HCT116 (cell line): ENCODE measurements at regions of chr2 and their contacts with region 1.

Region 1: DNA sequence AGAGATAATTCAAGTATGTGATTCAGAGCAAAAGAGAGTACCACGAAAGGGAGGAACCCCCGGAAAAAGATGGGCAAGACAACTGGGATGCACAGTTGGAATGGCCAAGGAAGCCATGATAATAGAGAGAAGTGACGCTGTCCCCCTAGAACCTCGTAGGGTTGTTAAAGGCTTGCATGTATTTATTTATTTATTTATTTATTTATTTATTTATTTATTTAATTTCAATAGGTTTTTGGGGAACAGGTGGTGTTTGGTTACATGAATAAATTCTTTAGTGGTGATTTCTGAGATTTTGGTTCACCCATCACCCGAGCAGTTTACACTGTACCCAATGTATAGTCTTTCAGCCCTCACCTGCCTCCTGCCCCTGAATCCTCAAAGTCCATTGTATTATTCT is 11.5 kb upstream of the PDCL3 start:
- DNase-seq: no peak
- ATAC-seq: no peak
- H3K4me3 ChIP-seq: no peak overlapping the region
- H3K27ac ChIP-seq: no peak overlapping the region
- H3K4me1 ChIP-seq: no peaks in the 10 kb centered on the region
- H3K27me3 ChIP-seq: no peaks in the 10 kb centered on the region
- CTCF ChIP-seq: no peak
- POLR2A ChIP-seq: no peak
- RAD21 ChIP-seq: no peak

Region 2: GRCh38 chr2:100562732-100563720 is 11.7 kb after region 1 on chr2 and contains the start of gene PDCL3:
- CTCF ChIA-PET with region 1: no interaction called
- POLR2A ChIA-PET with region 1: interaction called, 13 read pairs
- RAD21 ChIA-PET with region 1: no interaction called
- intact Hi-C with region 1: no loop called
- DNase-seq: peak; percentile 97
- ATAC-seq: peak; percentile 91
- H3K4me3 ChIP-seq: peak within 1 kb of the TSS; percentile 82 to 86
- H3K27ac ChIP-seq: peak within 1 kb of the TSS; percentile 76
- H3K4me1 ChIP-seq: peaks cover 11 to 17% of the 10 kb centered on the region in 2 experiments; a peak in 3 of 4 replicates
- H3K27me3 ChIP-seq: no peaks in the 10 kb centered on the region
- CTCF ChIP-seq: peak in 1 of 3 experiments; percentile 27; a peak in 1 of 6 replicates
- POLR2A ChIP-seq: no peak
- RAD21 ChIP-seq: no peak
- total RNA-seq, gene PDCL3: 26.3 TPM